ENCODE measurements at regions of chr3 and their contacts with region 1.

Region 1: GRCh38 chr3:56758539-56758981 is 43.2 kb downstream of the ARHGEF3 start:
- DNase-seq: peak; percentile 35
- ATAC-seq: peak; percentile 64
- H3K4me3 ChIP-seq: peak overlapping the region in 2 of 5 experiments; percentile 5 to 44
- H3K4me3 Mint-ChIP-seq: peak overlapping the region; percentile 72
- H3K27ac ChIP-seq: peak overlapping the region; percentile 67 to 81
- H3K27ac Mint-ChIP-seq: peak overlapping the region; percentile 97
- H3K4me1 ChIP-seq: peaks cover 43 to 57% of the 10 kb centered on the region in 2 donors
- H3K4me1 Mint-ChIP-seq: peaks cover 59% of the 10 kb centered on the region
- H3K27me3 ChIP-seq: no peaks in the 10 kb centered on the region
- H3K27me3 Mint-ChIP-seq: no peaks in the 10 kb centered on the region
- CTCF ChIP-seq: no peak

Region 2: DNA sequence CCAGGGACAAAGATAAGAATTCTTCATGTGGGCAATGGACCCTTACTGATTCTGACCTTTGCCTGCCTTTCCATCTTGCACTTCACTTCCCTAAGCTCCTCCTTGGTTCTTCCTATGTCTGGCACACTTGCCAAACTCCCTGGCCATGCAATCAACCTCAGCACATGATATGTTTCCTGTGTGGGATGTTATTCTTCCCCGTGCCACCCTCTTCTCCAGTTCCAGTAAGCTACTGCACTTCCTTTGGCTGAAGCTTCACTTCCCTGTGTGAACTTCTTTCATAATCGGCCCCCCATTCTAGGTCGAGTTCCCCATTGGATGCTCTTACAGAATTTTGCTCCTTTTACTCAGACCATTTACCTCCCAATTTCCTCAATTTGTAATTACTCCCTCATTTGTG is 64.8 kb before region 1 on chr3:
- CTCF ChIA-PET with region 1: no interaction called
- POLR2A ChIA-PET with region 1: no interaction called
- intact Hi-C with region 1: no loop called
- DNase-seq: no peak
- ATAC-seq: no peak
- H3K4me3 ChIP-seq: no peak overlapping the region
- H3K4me3 Mint-ChIP-seq: no peak overlapping the region
- H3K27ac ChIP-seq: no peak overlapping the region
- H3K27ac Mint-ChIP-seq: no peak overlapping the region
- H3K4me1 ChIP-seq: peaks cover 4 to 18% of the 10 kb centered on the region in 2 donors
- H3K4me1 Mint-ChIP-seq: peaks cover 36% of the 10 kb centered on the region
- H3K27me3 ChIP-seq: no peaks in the 10 kb centered on the region
- H3K27me3 Mint-ChIP-seq: no peaks in the 10 kb centered on the region
- CTCF ChIP-seq: no peak

Region 3: GRCh38 chr3:56769116-56769707 is 10.7 kb after region 1 on chr3:
- CTCF ChIA-PET with region 1: interaction called, 4 read pairs
- POLR2A ChIA-PET with region 1: interaction called, 10 read pairs
- intact Hi-C with region 1: no loop called
- DNase-seq: no peak
- ATAC-seq: no peak
- H3K4me3 ChIP-seq: no peak overlapping the region
- H3K4me3 Mint-ChIP-seq: no peak overlapping the region
- H3K27ac ChIP-seq: no peak overlapping the region
- H3K27ac Mint-ChIP-seq: no peak overlapping the region
- H3K4me1 ChIP-seq: no peaks in the 10 kb centered on the region
- H3K4me1 Mint-ChIP-seq: peaks cover 8% of the 10 kb centered on the region
- H3K27me3 ChIP-seq: no peaks in the 10 kb centered on the region
- H3K27me3 Mint-ChIP-seq: no peaks in the 10 kb centered on the region
- CTCF ChIP-seq: no peak

Region 4: GRCh38 chr3:56783644-56784447 is 25.3 kb after region 1 on chr3:
- CTCF ChIA-PET with region 1: interaction called, 22 read pairs
- POLR2A ChIA-PET with region 1: interaction called, 13 read pairs
- intact Hi-C with region 1: loop called (anchors 1 kb)
- DNase-seq: peak; percentile 87
- ATAC-seq: peak; percentile 99
- H3K4me3 ChIP-seq: peak overlapping the region in 1 of 5 experiments; percentile 45
- H3K4me3 Mint-ChIP-seq: peak overlapping the region; percentile 52
- H3K27ac ChIP-seq: peak overlapping the region; percentile 71 to 78
- H3K27ac Mint-ChIP-seq: peak overlapping the region; percentile 91
- H3K4me1 ChIP-seq: peaks cover 55 to 77% of the 10 kb centered on the region in 2 donors
- H3K4me1 Mint-ChIP-seq: peaks cover 82% of the 10 kb centered on the region
- H3K27me3 ChIP-seq: no peaks in the 10 kb centered on the region
- H3K27me3 Mint-ChIP-seq: no peaks in the 10 kb centered on the region
- CTCF ChIP-seq: no peak